OCI-LY7 (cell line): ENCODE measurements at regions of chr12 and their contacts with region 1.

Region 1: DNA sequence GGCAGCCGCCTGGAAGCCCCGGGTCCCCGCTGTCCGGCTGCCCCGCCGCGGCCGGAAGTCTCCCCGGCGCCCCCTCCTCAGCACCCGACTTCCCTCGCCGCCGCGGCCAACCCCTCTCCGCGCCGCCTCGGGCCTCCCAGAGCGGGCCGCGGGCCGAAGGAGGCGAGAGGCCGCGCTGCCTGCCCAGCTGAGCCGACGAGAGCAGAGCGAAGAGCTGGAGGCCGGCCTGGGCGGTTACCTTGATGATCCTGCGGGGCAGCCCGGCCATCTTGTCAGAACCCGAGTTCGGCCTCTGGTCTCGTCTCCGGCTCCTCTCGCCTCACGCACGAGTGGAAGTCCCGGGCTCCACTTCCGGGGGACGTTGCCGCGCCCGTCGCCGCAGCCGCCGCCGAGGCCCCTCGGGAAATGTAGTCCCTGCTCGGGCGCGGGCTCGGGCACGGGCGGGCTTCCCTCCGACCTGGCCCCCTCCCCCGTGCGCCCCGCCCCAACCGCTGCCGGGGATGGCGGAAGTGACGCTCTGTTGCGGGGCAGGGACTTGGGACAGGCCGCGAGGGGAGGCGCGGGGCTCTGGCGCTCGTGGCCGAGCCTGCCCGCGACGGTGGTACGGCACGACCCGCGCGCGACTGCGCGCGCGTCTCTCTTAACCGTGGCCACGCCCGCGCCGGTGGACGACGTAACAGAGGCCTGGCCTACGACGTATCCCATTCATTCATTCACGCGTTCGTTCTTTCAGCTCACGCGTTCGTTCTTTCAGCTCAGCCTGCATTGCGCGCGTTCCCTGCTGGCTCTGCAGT is at the start of gene UBE2N:
- DNase-seq: peak; percentile 95
- H3K4me3 ChIP-seq: peak within 1 kb of the TSS; percentile 98
- H3K27ac ChIP-seq: peak within 1 kb of the TSS; percentile 77
- H3K4me1 ChIP-seq: peaks cover 46% of the 10 kb centered on the region
- CTCF ChIP-seq: no peak
- total RNA-seq, gene UBE2N: 193 and 214 TPM in 2 replicates

Region 2: DNA sequence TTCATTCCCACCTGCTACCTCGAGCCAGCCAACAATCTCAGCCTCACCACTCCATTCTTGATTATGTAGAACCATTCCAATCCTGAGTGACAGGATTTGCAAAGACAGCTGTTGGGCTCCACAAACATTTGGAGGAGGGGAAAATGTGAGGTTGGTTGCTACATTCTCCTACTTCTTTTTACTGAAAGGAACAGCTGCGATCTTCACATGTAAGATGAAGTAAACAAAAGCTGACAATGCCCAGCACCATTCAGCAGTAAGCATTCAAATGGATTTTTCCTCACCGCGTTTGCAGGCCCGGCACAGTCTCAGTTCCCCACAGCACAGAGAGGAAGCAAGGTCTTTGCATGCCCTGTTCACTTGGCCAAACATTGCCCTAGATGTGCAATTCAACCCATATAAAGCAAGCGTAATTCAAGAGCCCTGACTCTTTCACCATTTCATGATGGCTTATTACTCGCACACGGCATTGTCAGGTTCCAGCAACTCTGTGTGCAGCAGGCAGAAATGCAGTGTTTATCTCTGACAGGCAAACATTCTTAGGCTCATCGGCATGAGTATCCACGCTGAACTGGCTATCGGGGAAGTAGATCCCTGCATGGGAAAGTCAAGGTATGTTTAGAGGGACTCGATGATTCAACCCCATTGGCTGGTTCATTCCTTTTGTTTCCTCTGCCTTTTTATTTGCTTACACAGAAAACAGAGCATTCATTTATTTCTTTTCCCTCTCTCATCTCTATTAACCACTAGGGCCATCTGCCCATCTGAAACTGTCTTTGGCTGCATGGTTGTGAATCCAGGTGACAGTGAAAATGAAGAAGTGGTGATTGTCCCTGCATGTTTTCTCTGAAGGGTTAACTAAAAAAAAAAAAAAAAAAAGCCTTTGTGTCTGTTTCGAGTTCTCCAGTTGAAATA is 975.2 kb before region 1 on chr12:
- CTCF ChIA-PET with region 1: no interaction called
- POLR2A ChIA-PET with region 1: no interaction called
- intact Hi-C with region 1: loop called (anchors 5 kb)
- DNase-seq: peak; percentile 92
- H3K4me3 ChIP-seq: peak overlapping the region; percentile 70
- H3K27ac ChIP-seq: peak overlapping the region; percentile 98
- H3K4me1 ChIP-seq: peaks cover 83% of the 10 kb centered on the region
- CTCF ChIP-seq: no peak; the same call in 1 of the 2 replicates

Region 3: GRCh38 chr12:92928962-92929915 is 512.6 kb before region 1 on chr12 and contains the start of gene EEA1:
- CTCF ChIA-PET with region 1: no interaction called
- POLR2A ChIA-PET with region 1: interaction called, 3 read pairs
- intact Hi-C with region 1: loop called (anchors 5 kb)
- DNase-seq: peak; percentile 97
- H3K4me3 ChIP-seq: peak within 1 kb of the TSS; percentile 75
- H3K27ac ChIP-seq: peak within 1 kb of the TSS; percentile 78
- H3K4me1 ChIP-seq: peaks cover 28% of the 10 kb centered on the region
- CTCF ChIP-seq: peak; percentile 40; the same call in 1 of the 2 replicates
- total RNA-seq, gene EEA1: 3.0 and 8.4 TPM in 2 replicates

Region 4: DNA sequence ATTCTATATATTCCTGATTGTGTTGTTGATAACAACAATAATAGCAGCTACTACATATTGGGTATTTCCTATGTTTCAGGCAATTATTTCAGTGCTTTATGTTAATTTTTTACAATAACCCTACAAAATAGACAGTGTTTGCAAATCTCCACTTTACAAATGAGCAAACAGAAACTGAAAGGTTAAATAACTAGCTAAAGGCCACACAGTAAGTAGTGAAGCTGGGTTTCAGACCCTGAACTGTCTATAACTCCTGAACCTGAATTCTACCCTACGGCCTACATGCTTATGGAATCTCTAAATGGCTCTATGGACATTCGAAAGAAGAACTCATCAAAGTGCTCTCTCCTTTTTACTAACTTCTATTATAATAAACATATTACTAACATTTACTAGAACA is 83.8 kb before region 1 on chr12:
- CTCF ChIA-PET with region 1: no interaction called
- POLR2A ChIA-PET with region 1: no interaction called
- intact Hi-C with region 1: no loop called
- DNase-seq: no peak
- H3K4me3 ChIP-seq: no peak overlapping the region
- H3K27ac ChIP-seq: no peak overlapping the region
- H3K4me1 ChIP-seq: no peaks in the 10 kb centered on the region
- CTCF ChIP-seq: no peak

Region 5: DNA sequence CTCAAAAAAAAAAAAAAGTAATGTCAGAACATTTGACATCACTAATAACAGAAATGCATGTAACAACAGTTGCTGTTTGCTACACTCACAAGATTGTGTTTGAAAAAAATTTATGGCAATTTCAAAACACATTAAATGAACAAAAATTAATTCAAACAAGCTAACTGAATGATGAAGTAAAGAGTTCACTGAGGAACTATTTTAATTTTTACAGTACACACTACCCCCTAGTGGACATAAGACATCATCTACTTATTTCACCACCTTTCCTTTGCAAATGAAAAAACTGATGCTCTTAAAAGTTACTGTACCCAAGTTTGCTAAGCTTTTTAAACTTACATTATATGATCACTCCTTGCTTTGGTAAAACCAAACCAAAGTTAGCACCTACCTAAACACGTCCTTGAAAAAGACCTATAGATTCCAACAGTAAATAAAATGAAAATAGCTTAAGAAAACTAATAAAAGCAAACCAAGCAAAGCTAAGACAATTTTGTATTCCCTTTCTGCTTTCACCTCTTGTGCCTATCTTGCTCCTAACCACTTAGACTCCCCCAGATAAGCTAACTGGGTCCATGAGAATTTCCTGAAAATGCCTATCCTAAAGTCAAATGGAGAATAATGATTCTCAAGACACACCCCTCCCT is 22.3 kb before region 1 on chr12:
- CTCF ChIA-PET with region 1: interaction called, 5 read pairs
- POLR2A ChIA-PET with region 1: interaction called, 15 read pairs
- intact Hi-C with region 1: no loop called
- DNase-seq: peak; percentile 70
- H3K4me3 ChIP-seq: no peak overlapping the region
- H3K27ac ChIP-seq: no peak overlapping the region
- H3K4me1 ChIP-seq: peaks cover 85% of the 10 kb centered on the region
- CTCF ChIP-seq: peak; percentile 85

Region 6: GRCh38 chr12:93426412-93426805 is 15.4 kb before region 1 on chr12:
- CTCF ChIA-PET with region 1: no interaction called
- POLR2A ChIA-PET with region 1: interaction called, 38 read pairs
- intact Hi-C with region 1: no loop called
- DNase-seq: no peak
- H3K4me3 ChIP-seq: peak overlapping the region; percentile 39
- H3K27ac ChIP-seq: peak overlapping the region; percentile 53
- H3K4me1 ChIP-seq: peaks cover 85% of the 10 kb centered on the region
- CTCF ChIP-seq: no peak

Region 7: DNA sequence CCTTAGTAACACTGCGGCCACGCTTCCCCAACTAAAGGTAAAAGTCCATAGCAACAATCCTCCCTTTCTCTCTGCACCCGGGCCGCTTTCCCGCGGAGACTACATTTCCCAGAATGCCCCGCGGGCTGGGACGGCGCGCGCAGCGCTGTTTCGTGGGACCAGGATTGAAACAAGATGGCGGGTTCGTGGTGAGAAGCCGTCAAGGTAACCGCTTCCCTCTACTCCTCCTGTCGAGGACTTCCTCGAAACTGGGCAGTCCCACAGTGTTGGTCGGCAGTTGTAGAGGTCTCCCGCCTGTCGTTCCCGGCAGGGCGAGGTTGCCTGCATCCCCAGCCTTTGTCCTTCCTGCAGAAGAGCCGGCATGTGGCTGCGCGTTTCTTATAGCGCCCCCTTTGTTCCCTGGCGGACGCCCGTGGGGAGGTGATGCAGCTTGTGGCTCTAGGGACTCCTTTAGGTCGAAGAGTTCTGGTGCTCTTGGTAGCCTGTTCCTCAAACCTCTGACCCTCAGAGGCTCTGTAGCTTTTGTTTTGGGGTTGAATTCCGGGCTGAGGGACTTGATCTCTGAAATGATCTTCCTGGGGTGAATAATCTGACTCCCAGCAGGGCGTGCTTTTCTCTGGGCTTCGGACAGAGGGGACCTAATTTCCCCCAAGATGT is 25.7 kb after region 1 on chr12 and contains the start of gene MRPL42:
- CTCF ChIA-PET with region 1: no interaction called
- POLR2A ChIA-PET with region 1: interaction called, 7 read pairs
- intact Hi-C with region 1: loop called (anchors 1 kb)
- DNase-seq: peak; percentile 92
- H3K4me3 ChIP-seq: peak within 1 kb of the TSS; percentile 81
- H3K27ac ChIP-seq: peak within 1 kb of the TSS; percentile 45
- H3K4me1 ChIP-seq: peaks cover 12% of the 10 kb centered on the region
- CTCF ChIP-seq: peak; percentile 86
- total RNA-seq, gene MRPL42: 51.3 and 57.1 TPM in 2 replicates

Region 8: DNA sequence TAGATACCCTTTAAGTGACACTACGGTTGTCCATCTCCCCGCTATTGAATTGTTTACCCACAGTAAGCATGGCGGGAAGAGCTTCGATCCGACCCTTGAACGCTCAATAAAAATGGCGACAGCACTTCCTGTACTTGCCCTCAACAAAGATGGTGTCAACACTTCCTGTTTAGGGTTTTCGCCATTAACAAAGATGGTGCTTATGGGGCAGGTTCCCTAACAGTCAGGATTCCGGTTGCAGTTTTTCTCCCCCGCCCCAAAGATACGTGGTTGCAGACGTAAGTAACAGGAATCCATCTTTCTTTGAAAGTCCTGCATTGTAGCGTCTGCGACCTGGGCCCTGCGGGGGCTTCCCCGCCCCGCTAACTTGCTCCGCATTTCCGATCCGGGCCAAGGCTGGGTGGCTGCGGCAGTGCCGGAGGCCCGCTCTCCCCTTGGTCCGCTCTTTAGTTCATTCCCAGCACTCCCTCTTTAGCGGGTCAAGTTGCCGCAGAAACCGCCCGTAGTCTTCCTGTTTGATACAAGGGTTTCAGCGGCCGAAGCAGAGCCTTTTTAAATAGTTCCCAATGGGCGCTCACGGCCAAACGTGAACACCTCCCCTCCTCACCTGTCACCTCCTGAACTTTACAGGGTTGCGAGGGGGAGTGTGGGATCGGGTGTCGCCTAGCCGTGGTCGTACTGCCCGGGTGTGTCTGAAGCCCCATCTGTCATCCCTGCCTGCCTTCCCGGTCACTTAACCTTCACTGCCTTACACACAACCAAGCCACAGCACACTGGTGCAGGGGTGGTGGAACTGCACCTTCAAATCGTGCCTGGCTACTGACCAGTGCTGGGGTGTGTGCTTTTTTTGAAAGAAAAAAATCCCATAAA is 235.6 kb after region 1 on chr12 and contains the start of gene CRADD:
- CTCF ChIA-PET with region 1: no interaction called
- POLR2A ChIA-PET with region 1: interaction called, 3 read pairs
- intact Hi-C with region 1: loop called (anchors 10 kb)
- DNase-seq: peak; percentile 99
- H3K4me3 ChIP-seq: peak within 1 kb of the TSS; percentile 76
- H3K27ac ChIP-seq: peak within 1 kb of the TSS; percentile 86
- H3K4me1 ChIP-seq: peaks cover 24% of the 10 kb centered on the region
- CTCF ChIP-seq: no peak
- total RNA-seq, gene CRADD: 8.9 and 16.8 TPM in 2 replicates